ENCODE measurements at regions of chr16 and their contacts with region 1.

Region 1: GRCh38 chr16:20598832-20599469 is 22.8 kb upstream of the ACSM2B start:
- DNase-seq: peak; percentile 99
- ATAC-seq: peak; percentile 93
- H3K4me3 ChIP-seq: no peak overlapping the region; a peak in 1 of 6 replicates
- H3K27ac ChIP-seq: peak overlapping the region; percentile 91
- H3K4me1 ChIP-seq: peaks cover 67% of the 10 kb centered on the region
- H3K27me3 ChIP-seq: no peaks in the 10 kb centered on the region
- CTCF ChIP-seq: 0 out of 2 replicates have a peak, but pooled peaks have one; percentile 7
- EP300 ChIP-seq: peak; percentile 89 to 98
- POLR2A ChIP-seq: no peak
- RAD21 ChIP-seq: peak; percentile 60; the same call in 1 of the 2 replicates

Region 2: GRCh38 chr16:20611975-20612481 is 13.1 kb after region 1 on chr16:
- CTCF ChIA-PET with region 1: no interaction called
- POLR2A ChIA-PET with region 1: interaction called, 18 read pairs
- in situ Hi-C with region 1: no loop called
- intact Hi-C with region 1: no loop called
- DNase-seq: no peak
- ATAC-seq: peak; percentile 23
- H3K4me3 ChIP-seq: peak overlapping the region in 1 of 3 experiments; percentile 47; a peak in 1 of 6 replicates
- H3K27ac ChIP-seq: no peak overlapping the region
- H3K4me1 ChIP-seq: peaks cover 60% of the 10 kb centered on the region
- H3K27me3 ChIP-seq: peaks cover 0 to 14% of the 10 kb centered on the region in 2 experiments; a peak in 3 of 5 replicates
- CTCF ChIP-seq: no peak
- EP300 ChIP-seq: no peak
- POLR2A ChIP-seq: no peak
- RAD21 ChIP-seq: no peak

Region 3: GRCh38 chr16:20675488-20676267 is 76.7 kb after region 1 on chr16:
- CTCF ChIA-PET with region 1: no interaction called
- POLR2A ChIA-PET with region 1: interaction called, 8 read pairs
- in situ Hi-C with region 1: no loop called
- intact Hi-C with region 1: loop called (anchors 5 kb)
- DNase-seq: peak; percentile 64
- ATAC-seq: peak; percentile 42
- H3K4me3 ChIP-seq: peak overlapping the region; percentile 75 to 84 (median 80)
- H3K27ac ChIP-seq: peak overlapping the region; percentile 31
- H3K4me1 ChIP-seq: peaks cover 57% of the 10 kb centered on the region
- H3K27me3 ChIP-seq: no peaks in the 10 kb centered on the region; a peak in 1 of 5 replicates
- CTCF ChIP-seq: no peak
- EP300 ChIP-seq: no peak
- POLR2A ChIP-seq: no peak
- RAD21 ChIP-seq: no peak